GM12878 (cell line): ENCODE measurements at regions of chr12 and their contacts with region 1.

Region 1: GRCh38 chr12:56387152-56387736 is 24.6 kb upstream of the APOF start:
- DNase-seq: no peak
- ATAC-seq: no peak
- H3K4me3 ChIP-seq: no peak overlapping the region
- H3K27ac ChIP-seq: no peak overlapping the region
- H3K4me1 ChIP-seq: no peaks in the 10 kb centered on the region
- H3K27me3 ChIP-seq: no peaks in the 10 kb centered on the region
- CTCF ChIP-seq: no peak
- EP300 ChIP-seq: no peak
- POLR2A ChIP-seq: no peak
- RAD21 ChIP-seq: no peak

Region 2: GRCh38 chr12:56425193-56425592 is 37.9 kb after region 1 on chr12:
- CTCF ChIA-PET with region 1: no interaction called
- POLR2A ChIA-PET with region 1: no interaction called
- RAD21 ChIA-PET with region 1: no interaction called
- SMC1A ChIA-PET with region 1: no interaction called
- in situ Hi-C with region 1: no loop called
- intact Hi-C with region 1: loop called (anchors 1 kb)
- DNase-seq: no peak
- ATAC-seq: no peak
- H3K4me3 ChIP-seq: no peak overlapping the region
- H3K27ac ChIP-seq: no peak overlapping the region
- H3K4me1 ChIP-seq: no peaks in the 10 kb centered on the region
- H3K27me3 ChIP-seq: no peaks in the 10 kb centered on the region
- CTCF ChIP-seq: no peak
- EP300 ChIP-seq: no peak
- POLR2A ChIP-seq: no peak
- RAD21 ChIP-seq: no peak